Activated naive CD4-positive, alpha-beta T cell treated with anti-CD3 and anti-CD28 coated beads for 36 hours (primary cell): ENCODE measurements at regions of chr4 and their contacts with region 1.

Region 1: GRCh38 chr4:70734168-70734954 is 12.6 kb downstream of the RUFY3 start:
- DNase-seq: peak; percentile 52
- H3K4me3 Mint-ChIP-seq: peak overlapping the region; percentile 58
- H3K27ac Mint-ChIP-seq: peak overlapping the region; percentile 25
- H3K4me1 Mint-ChIP-seq: peaks cover 37% of the 10 kb centered on the region
- H3K27me3 Mint-ChIP-seq: no peaks in the 10 kb centered on the region

Region 2: GRCh38 chr4:70505151-70505748 is 229.1 kb before region 1 on chr4:
- CTCF ChIA-PET with region 1: no interaction called
- intact Hi-C with region 1: no loop called
- DNase-seq: peak; percentile 64
- H3K4me3 Mint-ChIP-seq: no peak overlapping the region
- H3K27ac Mint-ChIP-seq: no peak overlapping the region
- H3K4me1 Mint-ChIP-seq: no peaks in the 10 kb centered on the region
- H3K27me3 Mint-ChIP-seq: no peaks in the 10 kb centered on the region

Region 3: GRCh38 chr4:70687821-70688794 is 46.3 kb before region 1 on chr4 and contains the start of gene UTP3:
- CTCF ChIA-PET with region 1: interaction called, 3 read pairs
- intact Hi-C with region 1: loop called (anchors 1 kb)
- DNase-seq: peak; percentile 96
- H3K4me3 Mint-ChIP-seq: peak within 1 kb of the TSS; percentile 87
- H3K27ac Mint-ChIP-seq: peak within 1 kb of the TSS; percentile 99
- H3K4me1 Mint-ChIP-seq: peaks cover 30% of the 10 kb centered on the region
- H3K27me3 Mint-ChIP-seq: no peaks in the 10 kb centered on the region
- total RNA-seq, gene UTP3: 18.7 to 20.0 TPM

Region 4: GRCh38 chr4:70721747-70722146 is 12.6 kb before region 1 on chr4 and contains the start of gene RUFY3:
- CTCF ChIA-PET with region 1: interaction called, 37 read pairs
- intact Hi-C with region 1: no loop called
- DNase-seq: no peak
- H3K4me3 Mint-ChIP-seq: peak within 1 kb of the TSS; percentile 4
- H3K27ac Mint-ChIP-seq: no peak within 1 kb of the TSS
- H3K4me1 Mint-ChIP-seq: peaks cover 24% of the 10 kb centered on the region
- H3K27me3 Mint-ChIP-seq: no peaks in the 10 kb centered on the region
- total RNA-seq, gene RUFY3: 14.9 to 18.0 TPM

Region 5: DNA sequence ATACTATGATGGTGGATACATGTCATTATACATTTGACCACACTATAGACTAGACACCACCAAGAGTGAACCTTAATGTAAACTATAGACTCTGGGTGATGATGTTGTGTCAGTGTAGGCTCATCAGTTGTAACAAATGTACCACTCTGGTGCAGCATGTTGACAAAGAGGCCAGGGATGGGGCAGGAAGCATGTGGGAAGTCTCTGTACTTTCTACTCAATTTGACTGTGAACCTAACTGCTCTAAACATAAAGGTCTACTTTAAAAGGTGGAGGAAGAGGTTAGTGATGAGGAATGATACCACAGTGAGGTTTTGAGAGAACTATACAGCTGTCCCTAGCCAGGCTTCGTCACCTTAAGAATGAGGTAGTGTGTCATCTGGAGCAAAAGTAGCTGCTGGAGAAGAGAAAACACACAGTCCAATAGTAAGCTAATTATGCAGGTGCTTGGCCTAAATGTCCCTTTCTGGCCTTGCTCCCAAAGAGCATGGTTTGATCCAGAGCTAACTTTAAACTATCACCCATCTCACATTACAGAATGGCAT is 67.0 kb after region 1 on chr4:
- CTCF ChIA-PET with region 1: interaction called, 12 read pairs
- intact Hi-C with region 1: loop called (anchors 1 kb)
- DNase-seq: peak; percentile 51
- H3K4me3 Mint-ChIP-seq: no peak overlapping the region
- H3K27ac Mint-ChIP-seq: no peak overlapping the region
- H3K4me1 Mint-ChIP-seq: peaks cover 21% of the 10 kb centered on the region
- H3K27me3 Mint-ChIP-seq: no peaks in the 10 kb centered on the region

Region 6: DNA sequence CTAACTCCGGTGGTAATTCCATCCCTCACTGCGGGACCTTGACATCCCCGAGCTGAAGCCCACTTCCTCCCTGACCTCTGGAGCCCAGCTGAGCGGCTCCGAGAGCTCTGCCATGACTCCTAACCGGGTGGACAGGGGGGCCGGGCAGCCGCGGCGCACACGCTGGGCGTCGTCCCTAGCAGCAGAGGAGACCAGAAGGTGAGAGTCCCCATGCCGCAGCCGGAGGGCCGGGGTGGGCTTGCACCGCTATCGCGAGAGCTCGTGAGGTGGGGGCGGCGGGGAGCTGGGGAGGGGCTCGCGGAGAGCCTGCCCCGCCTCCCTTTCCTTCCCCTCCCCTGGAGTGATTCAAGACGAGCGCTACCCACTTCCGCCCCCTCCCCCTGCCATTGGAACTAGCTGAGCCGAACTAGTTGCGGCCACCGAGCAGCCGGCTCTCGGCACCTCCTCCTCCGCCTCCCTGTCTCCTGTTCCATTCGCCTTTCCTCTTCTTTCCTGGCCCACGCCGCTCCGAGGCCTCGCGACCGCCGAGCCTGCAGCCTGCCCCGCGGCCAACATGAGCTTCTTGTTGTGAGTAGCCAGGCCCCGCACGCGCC is 167.7 kb after region 1 on chr4 and contains the start of gene MOB1B:
- CTCF ChIA-PET with region 1: no interaction called
- intact Hi-C with region 1: loop called (anchors 2 kb)
- DNase-seq: peak; percentile 92
- H3K4me3 Mint-ChIP-seq: peak within 1 kb of the TSS; percentile 88
- H3K27ac Mint-ChIP-seq: peak within 1 kb of the TSS; percentile 54
- H3K4me1 Mint-ChIP-seq: peaks cover 31% of the 10 kb centered on the region
- H3K27me3 Mint-ChIP-seq: no peaks in the 10 kb centered on the region
- total RNA-seq, gene MOB1B: 14.4 to 16.2 TPM

Region 7: DNA sequence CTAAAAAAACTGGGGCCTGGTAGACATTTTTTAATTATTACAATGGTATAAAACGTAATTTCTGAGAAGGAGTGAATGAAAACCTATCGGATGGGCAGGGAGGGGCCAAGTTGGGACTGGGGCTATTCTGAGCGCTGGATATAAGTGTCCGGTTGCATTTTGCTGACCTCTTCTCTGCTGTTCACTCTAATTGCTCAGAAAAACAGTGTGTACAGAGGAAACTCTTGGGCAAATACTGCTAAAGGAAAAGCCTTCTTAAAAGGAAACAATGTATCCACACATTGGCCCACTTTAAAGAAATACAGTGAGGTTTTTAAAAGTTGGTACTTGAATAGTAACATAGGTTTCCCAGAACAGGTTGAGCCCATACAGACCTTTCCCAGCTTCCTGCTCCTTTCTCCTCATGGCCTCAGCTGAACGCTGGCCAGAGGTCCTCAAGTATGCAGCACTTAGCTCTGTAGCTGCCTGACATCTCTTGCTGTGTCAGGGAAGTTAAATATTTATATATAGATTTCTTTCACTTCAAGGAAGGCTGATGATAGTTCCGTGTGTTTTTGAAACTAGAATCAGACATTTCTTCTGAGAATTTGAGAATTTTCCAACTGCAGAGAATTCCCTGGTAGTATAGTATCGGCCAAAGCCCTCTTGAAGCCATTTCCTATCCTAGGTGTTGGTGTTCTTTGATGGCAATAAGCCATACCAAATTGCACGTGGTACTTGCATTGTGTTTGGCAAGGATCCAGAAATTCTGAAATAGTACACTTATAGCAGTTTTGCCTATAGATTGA is 507.3 kb after region 1 on chr4:
- CTCF ChIA-PET with region 1: no interaction called
- intact Hi-C with region 1: no loop called
- DNase-seq: no peak
- H3K4me3 Mint-ChIP-seq: no peak overlapping the region
- H3K27ac Mint-ChIP-seq: no peak overlapping the region
- H3K4me1 Mint-ChIP-seq: no peaks in the 10 kb centered on the region
- H3K27me3 Mint-ChIP-seq: no peaks in the 10 kb centered on the region